Right lobe of liver (tissue), 6 donors: ENCODE measurements at regions of chr17 and their contacts with region 1.

Region 1: DNA sequence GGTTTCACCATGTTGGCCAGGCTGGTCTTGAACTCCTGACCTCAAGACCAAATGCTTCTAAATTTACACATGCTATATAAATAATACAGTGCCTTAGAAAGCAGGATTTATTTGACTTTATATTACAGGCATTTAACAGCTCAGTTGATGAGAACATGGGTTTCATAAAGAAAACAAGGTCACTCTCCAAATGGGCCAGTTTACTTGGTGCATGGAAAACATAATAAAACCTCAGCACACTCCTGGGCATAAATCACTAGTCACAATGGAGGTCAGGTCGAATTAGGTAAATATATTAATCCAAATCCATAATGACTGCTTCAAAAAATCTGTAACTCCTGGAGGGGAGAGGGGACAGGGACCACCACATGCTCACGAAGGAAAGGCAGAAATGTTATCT is 24.5 kb downstream of the APPBP2 start:
- DNase-seq: no peak
- ATAC-seq: no peak
- H3K4me3 ChIP-seq: no peak overlapping the region
- H3K27ac ChIP-seq: no peak overlapping the region
- H3K4me1 ChIP-seq: no peaks in the 10 kb centered on the region
- H3K27me3 ChIP-seq: no peaks in the 10 kb centered on the region
- CTCF ChIP-seq: no peak
- POLR2A ChIP-seq: no peak

Region 2: GRCh38 chr17:60573201-60574051 is 71.8 kb after region 1 on chr17:
- intact Hi-C with region 1: loop called in 1 of 2 experiments (anchors 5 kb)
- DNase-seq: no peak
- ATAC-seq: peak; percentile 9 to 52 (median 38)
- H3K4me3 ChIP-seq: no peak overlapping the region
- H3K27ac ChIP-seq: peak overlapping the region in 1 of 3 donors; percentile 33
- H3K4me1 ChIP-seq: no peaks in the 10 kb centered on the region
- H3K27me3 ChIP-seq: no peaks in the 10 kb centered on the region
- CTCF ChIP-seq: no peak
- POLR2A ChIP-seq: no peak